K562 (cell line): ENCODE measurements at regions of chr15 and their contacts with region 1.

Region 1: GRCh38 chr15:101773496-101774105 is 29.7 kb upstream of the OR4F6 start:
- DNase-seq: peak in 3 of 4 experiments; percentile 11 to 46 (median 23)
- ATAC-seq: no peak
- H3K4me3 ChIP-seq: no peak overlapping the region
- H3K27ac ChIP-seq: no peak overlapping the region
- H3K4me1 ChIP-seq: 0 out of 5 replicates have a peak, but pooled peaks cover 0 to 4% of the 10 kb centered on the region in 2 experiments
- H3K27me3 ChIP-seq: peaks cover 12 to 49% of the 10 kb centered on the region in 2 experiments; a peak in 3 of 5 replicates
- CTCF ChIP-seq: peak; percentile 66 to 67 (median 66)
- EP300 ChIP-seq: no peak
- POLR2A ChIP-seq: no peak
- RAD21 ChIP-seq: peak in 1 of 2 experiments; percentile 63; a peak in 2 of 4 replicates

Region 2: GRCh38 chr15:101608201-101608600 is 165.4 kb before region 1 on chr15:
- CTCF ChIA-PET with region 1: no interaction called
- POLR2A ChIA-PET with region 1: no interaction called
- in situ Hi-C with region 1: no loop called
- intact Hi-C with region 1: no loop called
- DNase-seq: no peak
- ATAC-seq: peak; percentile 63; the same call in 2 of the 3 replicates
- H3K4me3 ChIP-seq: no peak overlapping the region
- H3K27ac ChIP-seq: no peak overlapping the region
- H3K4me1 ChIP-seq: peaks cover 0 to 3% of the 10 kb centered on the region in 2 experiments; a peak in 2 of 5 replicates
- H3K27me3 ChIP-seq: peaks cover 27 to 60% of the 10 kb centered on the region in 2 experiments
- CTCF ChIP-seq: 0 out of 6 replicates have a peak, but pooled peaks of 1 of the 3 experiments have one; percentile 4
- EP300 ChIP-seq: no peak
- POLR2A ChIP-seq: no peak
- RAD21 ChIP-seq: no peak

Region 3: DNA sequence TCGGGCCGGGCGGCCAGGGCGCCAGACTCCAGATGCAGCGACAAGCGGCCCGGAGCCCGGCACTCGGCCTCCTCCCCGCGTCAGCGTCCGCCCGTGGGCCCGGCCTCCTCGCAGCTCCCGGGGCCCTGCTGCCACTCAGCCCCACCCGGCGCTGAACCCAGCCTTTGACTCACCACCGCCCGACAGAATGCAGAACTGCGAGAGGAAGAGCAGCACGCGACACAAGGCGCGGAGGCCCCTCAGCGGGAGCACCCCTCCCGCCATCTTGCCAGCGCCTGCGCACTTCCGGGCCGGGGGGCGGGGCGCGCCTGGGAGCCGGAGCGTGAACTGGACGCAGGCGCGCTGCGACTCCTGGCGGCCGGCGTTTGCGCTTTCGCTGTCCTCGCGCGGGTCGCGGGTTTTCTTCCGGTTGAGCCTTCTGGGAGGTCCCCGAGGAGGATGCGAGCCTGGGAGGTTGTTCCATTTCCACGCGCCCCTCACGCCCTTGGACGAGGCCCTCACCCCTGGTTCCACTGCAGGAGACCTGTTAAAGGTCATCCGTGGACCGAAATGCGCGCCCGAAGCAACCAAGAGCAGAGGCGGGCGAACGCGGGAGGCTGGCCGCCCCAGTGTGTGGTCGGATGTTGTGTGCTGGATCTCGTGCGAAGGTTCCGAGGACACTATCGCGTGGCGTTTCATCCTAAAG is 121.4 kb before region 1 on chr15 and contains the start of gene TM2D3:
- CTCF ChIA-PET with region 1: no interaction called
- POLR2A ChIA-PET with region 1: no interaction called
- in situ Hi-C with region 1: no loop called
- intact Hi-C with region 1: loop called (anchors 5 kb)
- DNase-seq: peak; percentile 96
- ATAC-seq: peak; percentile 93
- H3K4me3 ChIP-seq: peak within 1 kb of the TSS; percentile 81
- H3K27ac ChIP-seq: peak within 1 kb of the TSS; percentile 90
- H3K4me1 ChIP-seq: peaks cover 14 to 17% of the 10 kb centered on the region in 2 experiments; a peak in 4 of 5 replicates
- H3K27me3 ChIP-seq: no peaks in the 10 kb centered on the region
- CTCF ChIP-seq: peak; percentile 63 to 72 (median 64)
- EP300 ChIP-seq: no peak; the same call in 1 of the 2 replicates
- POLR2A ChIP-seq: peak; percentile 90
- RAD21 ChIP-seq: peak; percentile 30 to 52
- polyA plus RNA-seq, gene TM2D3: 59.2 to 67.9 TPM

Region 4: DNA sequence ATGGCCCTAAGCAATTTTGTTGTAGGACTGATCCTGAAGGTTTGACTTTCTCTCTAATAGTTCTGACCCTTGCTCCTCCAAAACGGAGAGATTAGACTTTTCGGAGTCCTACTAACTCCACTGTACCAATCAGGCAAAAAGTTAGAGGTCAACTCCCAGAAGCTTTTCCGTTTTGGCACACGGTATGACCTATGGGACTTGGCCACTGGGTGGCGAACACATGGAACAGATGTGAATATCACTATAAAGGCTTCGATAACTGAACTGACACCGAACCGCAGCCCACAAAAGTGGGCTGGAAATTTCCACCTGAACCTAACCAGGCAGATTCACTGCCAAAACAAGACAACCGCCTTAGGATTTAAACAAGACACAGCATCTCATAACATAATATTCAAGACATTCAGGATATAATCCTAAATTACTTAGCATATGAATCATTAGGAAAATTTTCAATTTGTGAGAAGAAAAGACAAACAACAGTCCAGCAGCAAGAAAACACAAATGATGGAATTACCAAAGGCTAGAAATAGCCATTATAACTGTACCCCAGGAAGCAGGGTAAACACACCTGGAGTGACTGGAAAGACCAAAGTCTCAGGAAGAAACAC is 109.2 kb before region 1 on chr15:
- CTCF ChIA-PET with region 1: no interaction called
- POLR2A ChIA-PET with region 1: no interaction called
- in situ Hi-C with region 1: no loop called
- intact Hi-C with region 1: no loop called
- DNase-seq: peak in 3 of 4 experiments; percentile 28 to 53 (median 29)
- ATAC-seq: peak; percentile 96
- H3K4me3 ChIP-seq: no peak overlapping the region
- H3K27ac ChIP-seq: no peak overlapping the region
- H3K4me1 ChIP-seq: no peaks in the 10 kb centered on the region; a peak in 1 of 5 replicates
- H3K27me3 ChIP-seq: no peaks in the 10 kb centered on the region
- CTCF ChIP-seq: peak; percentile 47 to 62 (median 47)
- EP300 ChIP-seq: no peak
- POLR2A ChIP-seq: no peak
- RAD21 ChIP-seq: peak in 1 of 2 experiments; percentile 40; a peak in 2 of 4 replicates